ENCODE measurements at regions of chr5 and their contacts with region 1.

Region 1: DNA sequence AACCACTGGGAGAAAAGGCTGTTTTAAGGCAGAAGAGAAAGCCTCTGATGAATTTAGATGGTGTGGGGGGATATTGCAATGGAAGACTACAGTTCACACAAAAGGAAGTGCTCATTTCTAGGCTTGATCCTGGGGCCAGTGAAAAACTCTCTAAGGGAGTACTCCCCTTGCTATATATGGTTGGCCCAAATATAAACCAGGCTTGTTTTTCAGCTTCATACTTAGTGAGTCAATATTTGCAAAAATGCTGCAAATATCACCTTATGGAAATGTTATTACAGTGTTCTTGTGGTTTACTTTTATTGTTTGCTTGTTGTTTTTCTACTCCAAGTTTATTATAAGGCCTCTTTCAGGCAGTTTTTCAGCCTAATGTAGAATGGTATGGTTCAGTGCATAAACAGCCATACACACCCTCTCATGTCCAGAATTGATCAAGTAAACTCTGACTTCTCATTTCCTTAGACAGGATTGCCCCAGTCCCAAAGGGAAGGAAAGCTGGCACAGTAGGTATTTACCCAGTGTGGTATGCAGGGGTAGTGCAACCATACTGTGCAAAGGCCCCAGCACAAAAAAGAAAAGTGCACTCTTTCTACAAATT is 115.1 kb downstream of the FEM1C start:
- DNase-seq: peak; percentile 86
- ATAC-seq: peak; percentile 78
- H3K4me3 ChIP-seq: peak overlapping the region; percentile 38
- H3K27ac ChIP-seq: peak overlapping the region; percentile 96
- H3K4me1 ChIP-seq: peaks cover 66% of the 10 kb centered on the region
- H3K27me3 ChIP-seq: no peaks in the 10 kb centered on the region
- CTCF ChIP-seq: no peak

Region 2: GRCh38 chr5:115349020-115349817 is 80.2 kb before region 1 on chr5:
- CTCF ChIA-PET with region 1: no interaction called
- POLR2A ChIA-PET with region 1: no interaction called
- intact Hi-C with region 1: loop called (anchors 1 kb)
- DNase-seq: peak; percentile 81
- ATAC-seq: peak; percentile 94
- H3K4me3 ChIP-seq: peak overlapping the region; percentile 26; the same call in 1 of the 2 replicates
- H3K27ac ChIP-seq: peak overlapping the region; percentile 57
- H3K4me1 ChIP-seq: peaks cover 28% of the 10 kb centered on the region
- H3K27me3 ChIP-seq: no peaks in the 10 kb centered on the region
- CTCF ChIP-seq: peak; percentile 25; the same call in 1 of the 2 replicates

Region 3: DNA sequence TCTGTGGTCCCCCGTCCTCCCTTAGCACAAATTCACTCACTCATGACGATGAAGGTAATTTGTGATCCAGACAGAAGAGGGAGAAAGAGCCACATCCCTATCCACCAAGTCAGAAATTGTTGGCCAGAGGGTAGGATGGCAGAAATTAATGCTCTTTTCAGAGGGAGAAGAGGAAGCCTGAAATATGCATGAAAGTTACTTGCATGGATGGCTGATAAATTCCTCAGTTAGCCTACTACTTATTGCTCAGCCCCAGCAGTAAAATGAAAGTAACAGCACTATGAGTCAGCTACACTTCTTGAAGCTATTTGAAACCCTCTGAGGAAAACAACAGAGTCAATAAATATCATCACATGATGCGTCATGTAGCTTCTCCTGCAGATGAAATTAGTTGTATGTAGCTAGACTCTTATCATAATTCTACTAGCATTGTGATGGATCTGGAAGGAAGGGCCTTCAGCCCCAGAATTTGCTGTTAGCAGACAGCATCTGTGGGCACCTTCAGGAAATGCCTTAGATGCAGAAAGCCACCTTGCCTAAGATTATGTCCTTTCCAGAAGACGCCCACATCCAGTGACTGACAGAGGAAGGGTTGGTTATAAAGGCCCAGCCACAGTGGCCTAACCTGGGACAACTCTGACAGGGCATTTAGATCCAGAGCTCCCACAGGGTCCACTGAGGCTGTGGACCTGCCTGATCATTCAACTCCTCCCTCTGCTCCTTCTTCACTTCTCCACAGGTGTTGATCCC is 51.8 kb before region 1 on chr5:
- CTCF ChIA-PET with region 1: no interaction called
- POLR2A ChIA-PET with region 1: no interaction called
- intact Hi-C with region 1: loop called (anchors 5 kb)
- DNase-seq: peak; percentile 86
- ATAC-seq: peak; percentile 88
- H3K4me3 ChIP-seq: peak overlapping the region; percentile 9; the same call in 1 of the 2 replicates
- H3K27ac ChIP-seq: peak overlapping the region; percentile 41
- H3K4me1 ChIP-seq: peaks cover 29% of the 10 kb centered on the region
- H3K27me3 ChIP-seq: no peaks in the 10 kb centered on the region
- CTCF ChIP-seq: peak; percentile 28; the same call in 1 of the 2 replicates

Region 4: DNA sequence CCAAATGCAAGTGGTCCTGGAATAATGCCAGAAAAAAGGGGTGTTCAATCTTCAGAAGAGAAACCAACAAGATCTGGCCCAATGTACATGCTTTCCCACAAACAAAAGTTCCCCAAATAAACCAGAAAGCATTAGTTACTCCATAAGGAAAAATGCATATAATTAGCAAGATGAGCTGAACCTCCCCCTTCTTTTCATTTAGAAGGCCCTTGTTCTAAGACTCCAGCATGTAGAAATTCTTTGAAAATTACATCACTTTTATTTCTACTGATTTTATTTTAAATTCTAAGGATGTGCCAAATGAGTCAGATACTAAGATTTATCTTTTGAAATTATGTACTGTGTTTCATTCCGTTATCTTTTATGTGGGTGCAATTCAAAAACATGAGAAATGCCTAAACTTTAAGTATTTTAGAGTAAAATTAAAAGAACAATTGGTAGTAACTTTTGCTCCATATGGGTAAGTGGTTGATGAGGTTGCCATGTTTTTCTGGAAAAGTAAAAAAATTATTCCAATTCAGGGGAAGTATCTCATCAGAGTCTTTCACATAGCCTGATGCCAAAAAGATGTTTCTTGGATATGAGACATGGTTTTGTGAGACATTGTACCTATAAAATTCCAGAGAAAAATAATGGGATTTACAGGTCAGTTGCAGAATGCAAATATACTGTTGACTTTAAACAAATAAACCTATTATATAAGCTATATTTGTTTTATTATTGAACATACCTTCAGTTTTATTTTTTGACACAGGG is 26.4 kb before region 1 on chr5:
- CTCF ChIA-PET with region 1: no interaction called
- POLR2A ChIA-PET with region 1: no interaction called
- intact Hi-C with region 1: loop called (anchors 1 kb)
- DNase-seq: peak; percentile 19
- ATAC-seq: peak; percentile 74
- H3K4me3 ChIP-seq: no peak overlapping the region
- H3K27ac ChIP-seq: peak overlapping the region; percentile 19; the same call in 1 of the 2 replicates
- H3K4me1 ChIP-seq: peaks cover 10% of the 10 kb centered on the region
- H3K27me3 ChIP-seq: no peaks in the 10 kb centered on the region
- CTCF ChIP-seq: no peak

Region 5: DNA sequence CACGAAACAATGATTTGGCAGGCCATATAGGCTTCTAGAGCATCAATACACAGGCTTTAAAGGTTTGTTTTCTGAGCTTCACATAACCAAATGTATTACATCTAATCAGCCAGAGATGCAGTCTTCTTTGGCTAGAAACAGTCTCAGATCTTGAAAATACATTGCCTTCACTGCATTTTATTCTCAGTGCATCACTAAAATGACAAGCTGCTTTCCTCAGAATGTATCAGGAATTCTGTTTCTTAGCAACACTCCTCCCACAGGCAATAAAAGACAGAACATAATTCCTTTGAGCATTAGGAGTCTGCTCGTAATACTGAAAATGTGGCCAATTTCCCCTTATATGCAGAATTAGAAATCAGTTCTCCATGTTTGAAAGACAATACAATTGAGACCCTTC is 78.2 kb after region 1 on chr5:
- CTCF ChIA-PET with region 1: no interaction called
- POLR2A ChIA-PET with region 1: no interaction called
- intact Hi-C with region 1: loop called (anchors 1 kb)
- DNase-seq: peak; percentile 8
- ATAC-seq: peak; percentile 9; the same call in 1 of the 2 replicates
- H3K4me3 ChIP-seq: no peak overlapping the region
- H3K27ac ChIP-seq: no peak overlapping the region
- H3K4me1 ChIP-seq: peaks cover 11% of the 10 kb centered on the region
- H3K27me3 ChIP-seq: no peaks in the 10 kb centered on the region
- CTCF ChIP-seq: no peak

Region 6: DNA sequence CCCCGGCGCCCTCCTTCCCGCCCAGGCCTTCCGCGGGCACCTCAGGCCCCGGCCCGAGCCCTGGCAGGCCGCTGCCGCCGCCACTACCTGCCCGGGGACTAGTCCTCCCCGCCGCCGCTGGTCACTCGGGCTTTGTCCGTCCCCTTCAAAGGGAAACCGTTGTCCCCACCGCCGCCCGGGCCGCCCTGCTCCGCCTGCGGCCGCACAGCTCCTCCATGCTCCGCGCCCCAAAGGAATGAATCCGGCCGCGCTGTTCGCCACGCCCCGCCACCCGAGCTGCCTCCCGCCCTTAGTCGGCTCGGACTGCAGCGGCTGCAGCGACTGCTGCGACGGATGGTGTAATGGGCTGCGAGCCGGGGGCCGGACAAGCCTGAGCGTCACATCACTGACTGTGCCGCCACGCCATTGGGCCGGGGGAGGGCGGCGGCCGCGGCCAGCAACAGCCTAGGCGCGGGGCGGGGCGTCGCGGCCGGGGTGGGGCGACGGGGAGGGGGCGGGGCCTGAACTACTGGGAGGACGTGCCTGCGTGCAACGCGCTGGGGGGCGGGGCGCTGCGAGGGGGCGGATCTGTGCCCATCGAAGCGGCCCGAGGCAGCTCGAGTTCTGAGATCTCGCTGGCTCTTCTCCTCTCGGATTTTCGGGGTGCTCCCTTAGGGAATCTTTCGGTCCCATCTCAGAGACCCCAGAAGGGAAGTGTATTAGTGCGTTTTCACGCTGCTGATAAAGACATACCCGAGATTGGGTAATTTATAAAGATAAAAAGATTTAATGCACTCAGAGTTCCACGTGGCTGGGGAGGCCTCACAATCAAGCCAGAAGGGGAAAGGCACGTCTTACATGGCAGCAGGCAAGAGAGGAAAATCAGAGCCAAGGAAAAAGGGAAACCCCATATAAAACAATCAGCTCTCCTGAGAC is 115.3 kb after region 1 on chr5 and contains the start of gene FEM1C:
- CTCF ChIA-PET with region 1: no interaction called
- POLR2A ChIA-PET with region 1: interaction called, 26 read pairs
- intact Hi-C with region 1: loop called (anchors 1 kb)
- DNase-seq: peak; percentile 95
- ATAC-seq: peak; percentile 95
- H3K4me3 ChIP-seq: peak within 1 kb of the TSS; percentile 79
- H3K27ac ChIP-seq: peak within 1 kb of the TSS; percentile 69
- H3K4me1 ChIP-seq: peaks cover 16% of the 10 kb centered on the region; the same call in 1 of the 2 replicates
- H3K27me3 ChIP-seq: no peaks in the 10 kb centered on the region
- CTCF ChIP-seq: no peak
- total RNA-seq, gene FEM1C: 8.4 and 9.1 TPM in 2 replicates

Region 7: GRCh38 chr5:115586601-115587048 is 157.2 kb after region 1 on chr5:
- CTCF ChIA-PET with region 1: no interaction called
- POLR2A ChIA-PET with region 1: no interaction called
- intact Hi-C with region 1: loop called (anchors 2 kb)
- DNase-seq: peak; percentile 53
- ATAC-seq: peak; percentile 51
- H3K4me3 ChIP-seq: no peak overlapping the region
- H3K27ac ChIP-seq: no peak overlapping the region
- H3K4me1 ChIP-seq: peaks cover 13% of the 10 kb centered on the region; the same call in 1 of the 2 replicates
- H3K27me3 ChIP-seq: no peaks in the 10 kb centered on the region
- CTCF ChIP-seq: peak; percentile 75

Measured in PC-3 (cell line).